ENCODE measurements at regions of chr16 and their contacts with region 1.

Region 1: DNA sequence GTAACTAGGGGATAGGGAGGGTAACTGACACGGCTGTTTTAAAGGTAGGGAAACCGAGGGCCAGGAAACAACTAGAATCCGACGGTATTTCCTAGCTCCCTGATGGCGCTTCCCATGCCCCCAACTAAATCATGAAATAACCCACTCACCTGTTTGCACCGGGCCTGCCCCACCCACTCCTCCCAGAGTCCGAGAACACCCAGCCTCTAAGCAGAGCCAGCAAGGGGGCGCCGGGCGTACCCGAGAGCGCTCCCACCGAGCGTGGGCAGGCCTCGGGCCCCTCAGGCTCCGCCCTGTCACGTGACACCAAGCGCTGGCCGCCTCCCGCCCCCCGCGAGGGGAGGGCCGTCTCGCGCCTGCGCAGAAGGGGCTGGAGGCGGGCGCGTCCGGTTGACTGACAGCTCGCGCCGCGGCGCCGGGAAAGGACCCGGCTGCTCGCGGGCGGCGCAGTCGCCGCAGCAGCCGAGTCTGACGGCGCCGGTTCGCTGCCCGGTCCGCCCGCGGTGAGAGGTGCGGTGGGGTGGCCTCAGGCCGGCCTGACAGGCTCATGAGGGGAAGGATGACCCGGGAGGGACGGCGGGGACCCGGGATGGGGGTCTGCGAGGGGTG is at the start of gene KIAA0513:
- DNase-seq: peak; percentile 96
- H3K4me3 Mint-ChIP-seq: peak within 1 kb of the TSS; percentile 91
- H3K27ac Mint-ChIP-seq: peak within 1 kb of the TSS; percentile 93
- H3K4me1 Mint-ChIP-seq: peaks cover 36% of the 10 kb centered on the region
- H3K27me3 Mint-ChIP-seq: no peaks in the 10 kb centered on the region
- total RNA-seq, gene KIAA0513: 12.6 and 12.9 TPM in 2 replicates

Region 2: DNA sequence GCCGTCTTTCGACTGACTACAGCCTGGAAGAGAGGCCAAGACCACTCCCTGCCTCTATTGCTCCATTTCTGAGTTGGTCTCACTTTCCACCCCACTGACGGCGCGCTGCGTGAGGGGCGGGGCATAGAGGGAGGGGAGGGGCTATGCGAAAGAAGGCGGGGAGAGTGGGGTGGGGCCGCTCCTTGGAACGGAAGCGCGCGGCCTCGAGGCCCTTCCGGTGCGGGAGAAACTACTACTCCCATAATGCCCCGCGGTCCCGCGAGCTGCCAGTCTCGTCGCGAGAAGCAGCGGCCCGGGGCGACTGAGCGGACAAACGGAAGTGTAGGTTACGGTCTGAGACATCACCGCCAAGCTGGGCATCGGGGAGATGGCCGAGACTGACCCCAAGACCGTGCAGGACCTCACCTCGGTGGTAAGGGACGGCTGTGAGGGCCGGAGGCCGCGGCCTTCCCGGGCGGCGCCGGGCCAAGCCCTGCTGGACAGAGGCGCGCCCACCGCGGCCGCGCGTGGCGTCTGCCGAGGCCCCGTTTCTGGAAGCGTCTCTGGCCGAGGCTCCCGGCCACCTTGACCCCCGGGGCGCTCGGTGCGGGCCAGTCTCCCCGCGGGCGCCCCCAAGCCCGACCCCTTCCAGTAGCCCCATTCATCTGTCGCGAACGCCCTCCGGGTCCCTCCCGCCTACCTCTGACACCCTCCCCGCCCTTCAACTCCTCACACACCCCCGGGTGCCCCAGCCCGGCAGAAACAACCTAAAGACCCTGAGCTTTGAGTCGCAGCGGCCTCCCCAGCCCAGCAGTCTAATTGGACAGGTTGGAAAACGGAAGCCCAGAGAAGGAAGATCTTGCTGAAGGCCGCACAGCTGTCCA is 1219.5 kb before region 1 on chr16 and contains the start of gene HSBP1:
- intact Hi-C with region 1: loop called (anchors 5 kb)
- DNase-seq: peak; percentile 91
- H3K4me3 Mint-ChIP-seq: peak within 1 kb of the TSS; percentile 98
- H3K27ac Mint-ChIP-seq: peak within 1 kb of the TSS; percentile 95
- H3K4me1 Mint-ChIP-seq: peaks cover 30% of the 10 kb centered on the region
- H3K27me3 Mint-ChIP-seq: peaks cover 2% of the 10 kb centered on the region
- total RNA-seq, gene HSBP1: 112 and 115 TPM in 2 replicates

Region 3: GRCh38 chr16:84548971-84549844 is 478.2 kb before region 1 on chr16:
- intact Hi-C with region 1: loop called (anchors 5 kb)
- DNase-seq: peak; percentile 30
- H3K4me3 Mint-ChIP-seq: peak overlapping the region; percentile 87
- H3K27ac Mint-ChIP-seq: peak overlapping the region; percentile 96
- H3K4me1 Mint-ChIP-seq: peaks cover 72% of the 10 kb centered on the region
- H3K27me3 Mint-ChIP-seq: no peaks in the 10 kb centered on the region

Region 4: GRCh38 chr16:84754353-84754856 is 273.0 kb before region 1 on chr16:
- intact Hi-C with region 1: loop called (anchors 5 kb)
- DNase-seq: peak; percentile 67
- H3K4me3 Mint-ChIP-seq: peak overlapping the region; percentile 60
- H3K27ac Mint-ChIP-seq: no peak overlapping the region
- H3K4me1 Mint-ChIP-seq: peaks cover 76% of the 10 kb centered on the region
- H3K27me3 Mint-ChIP-seq: no peaks in the 10 kb centered on the region

Region 5: DNA sequence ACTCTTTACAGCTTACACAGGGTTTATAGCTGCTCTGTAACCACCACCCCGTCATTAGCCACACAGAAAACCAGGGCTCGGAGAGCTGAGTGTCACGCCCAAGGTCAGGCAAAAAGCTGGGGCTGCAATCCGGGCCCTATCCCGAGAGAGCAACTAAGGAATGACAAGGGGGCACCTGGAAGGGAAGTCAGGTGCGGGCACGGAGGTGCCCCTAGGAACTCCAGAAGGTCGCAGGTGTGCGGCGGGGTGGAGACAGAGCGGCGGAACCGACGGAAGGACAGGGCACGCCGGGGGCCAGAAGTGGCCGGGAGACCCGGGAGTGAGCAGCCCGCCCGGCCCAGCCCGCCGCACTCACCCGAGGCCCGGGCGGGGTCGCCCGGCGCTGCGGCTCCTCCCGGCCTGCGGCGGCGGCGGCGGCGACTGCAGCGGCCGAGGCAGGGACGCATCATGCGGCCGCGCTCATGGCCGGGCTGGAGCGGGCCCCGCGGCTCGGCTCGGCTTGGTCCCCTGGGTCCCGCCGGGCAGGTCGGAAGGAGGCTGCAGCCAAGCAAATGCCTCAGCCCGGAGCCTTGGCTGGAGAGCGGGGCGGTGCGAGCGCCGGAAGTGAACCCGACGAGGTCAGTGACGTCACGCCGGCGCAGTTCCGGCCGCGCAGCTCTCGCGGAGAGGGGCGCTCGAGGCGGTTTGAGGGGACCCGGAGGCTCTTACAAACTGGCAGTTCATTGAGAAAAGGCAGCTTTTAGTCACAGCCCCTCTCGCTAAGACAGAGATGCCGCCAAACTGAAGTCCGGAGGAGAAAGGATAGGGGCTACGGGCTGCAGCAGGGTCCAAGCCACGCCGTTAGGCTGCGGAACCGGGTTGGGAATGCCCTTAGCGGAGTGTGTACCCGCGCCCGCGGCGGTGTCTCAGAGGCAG is 16.3 kb before region 1 on chr16 and contains the start of gene ZDHHC7:
- intact Hi-C with region 1: loop called (anchors 1 kb)
- DNase-seq: peak; percentile 80
- H3K4me3 Mint-ChIP-seq: peak within 1 kb of the TSS; percentile 98
- H3K27ac Mint-ChIP-seq: peak within 1 kb of the TSS; percentile 97
- H3K4me1 Mint-ChIP-seq: peaks cover 27% of the 10 kb centered on the region
- H3K27me3 Mint-ChIP-seq: peaks cover 5% of the 10 kb centered on the region
- total RNA-seq, gene ZDHHC7: 29.0 and 30.6 TPM in 2 replicates

Region 6: DNA sequence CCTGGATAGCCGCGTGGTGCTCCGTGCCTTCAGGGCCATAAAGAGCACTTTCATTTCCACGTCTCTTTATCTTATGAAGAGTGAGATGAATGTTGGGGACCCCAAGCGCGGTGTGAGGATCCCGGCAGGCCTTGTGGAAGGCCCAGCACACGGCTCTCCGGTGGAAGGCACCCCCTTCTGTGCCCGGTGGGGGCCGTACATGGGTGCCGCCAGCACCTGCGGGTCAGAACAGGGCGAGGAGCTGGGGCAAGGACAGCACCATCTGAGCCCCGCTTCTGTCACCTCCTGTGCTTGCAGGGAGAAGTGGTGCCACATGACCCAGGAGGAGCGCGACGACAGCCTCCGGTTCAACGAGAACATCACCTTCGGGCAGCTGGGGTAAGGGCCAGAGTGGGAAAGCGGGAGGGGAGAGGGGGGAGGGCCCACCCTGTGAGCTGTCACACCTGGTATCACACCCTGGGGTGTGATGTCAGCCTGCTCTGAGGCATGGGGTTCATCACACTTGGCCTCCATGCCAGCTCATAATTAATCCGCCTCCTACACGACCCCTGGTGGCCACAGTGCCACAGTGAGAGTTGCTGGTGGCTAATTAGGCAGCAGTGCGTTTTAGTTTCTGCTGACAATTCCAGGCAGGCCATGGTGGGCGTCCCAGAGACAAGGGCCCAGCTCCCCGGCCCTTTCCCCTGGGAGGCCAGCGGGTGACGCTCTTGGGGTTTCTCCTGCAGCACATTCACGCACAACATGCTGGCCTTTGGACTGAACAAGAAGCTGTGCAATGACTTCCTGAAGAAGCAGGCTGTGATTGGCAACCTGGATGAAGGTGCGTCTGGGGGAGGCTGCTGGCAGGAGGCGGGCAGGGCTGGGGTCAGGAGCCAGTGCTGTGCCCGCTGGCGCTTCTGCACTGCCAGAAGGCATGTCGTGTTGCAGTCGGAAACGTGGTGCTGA is 59.2 kb after region 1 on chr16:
- intact Hi-C with region 1: loop called (anchors 1 kb)
- DNase-seq: peak; percentile 64
- H3K4me3 Mint-ChIP-seq: no peak overlapping the region
- H3K27ac Mint-ChIP-seq: no peak overlapping the region
- H3K4me1 Mint-ChIP-seq: peaks cover 7% of the 10 kb centered on the region
- H3K27me3 Mint-ChIP-seq: no peaks in the 10 kb centered on the region

Region 7: GRCh38 chr16:85554112-85554813 is 526.8 kb after region 1 on chr16:
- intact Hi-C with region 1: loop called (anchors 1 kb)
- DNase-seq: peak; percentile 75
- H3K4me3 Mint-ChIP-seq: peak overlapping the region; percentile 90
- H3K27ac Mint-ChIP-seq: peak overlapping the region; percentile 95
- H3K4me1 Mint-ChIP-seq: peaks cover 34% of the 10 kb centered on the region
- H3K27me3 Mint-ChIP-seq: peaks cover 5% of the 10 kb centered on the region